Natural killer cell (primary cell): ENCODE measurements at regions of chr19 and their contacts with region 1.

Region 1: GRCh38 chr19:58305065-58305931 is at the start of gene ERVK3-1:
- DNase-seq: peak; percentile 86 to 98
- ATAC-seq: peak; percentile 94 to 99 (median 95)
- H3K4me3 ChIP-seq: peak within 1 kb of the TSS; percentile 60
- H3K4me3 Mint-ChIP-seq: peak within 1 kb of the TSS; percentile 98
- H3K27ac ChIP-seq: peak within 1 kb of the TSS; percentile 84
- H3K27ac Mint-ChIP-seq: peak within 1 kb of the TSS; percentile 99
- H3K4me1 ChIP-seq: peaks cover 10% of the 10 kb centered on the region
- H3K4me1 Mint-ChIP-seq: peaks cover 40 to 55% of the 10 kb centered on the region in 2 donors
- H3K27me3 ChIP-seq: no peaks in the 10 kb centered on the region
- H3K27me3 Mint-ChIP-seq: no peaks in the 10 kb centered on the region
- CTCF ChIP-seq: no peak
- total RNA-seq, gene ERVK3-1: 96.1 to 142 (median 119) TPM

Region 2: GRCh38 chr19:58243351-58243750 is 61.9 kb before region 1 on chr19:
- intact Hi-C with region 1: no loop called
- DNase-seq: no peak
- ATAC-seq: no peak
- H3K4me3 ChIP-seq: no peak overlapping the region
- H3K4me3 Mint-ChIP-seq: no peak overlapping the region
- H3K27ac ChIP-seq: no peak overlapping the region
- H3K27ac Mint-ChIP-seq: no peak overlapping the region
- H3K4me1 ChIP-seq: no peaks in the 10 kb centered on the region
- H3K4me1 Mint-ChIP-seq: peaks cover 4% of the 10 kb centered on the region in 2 donors
- H3K27me3 ChIP-seq: no peaks in the 10 kb centered on the region
- H3K27me3 Mint-ChIP-seq: no peaks in the 10 kb centered on the region
- CTCF ChIP-seq: no peak

Region 3: GRCh38 chr19:58278157-58279041 is 26.9 kb before region 1 on chr19 and contains the start of gene ZNF8:
- intact Hi-C with region 1: loop called (anchors 1 kb)
- DNase-seq: peak; percentile 93 to 97
- ATAC-seq: peak; percentile 97 to 100 (median 98)
- H3K4me3 ChIP-seq: peak within 1 kb of the TSS; percentile 94
- H3K4me3 Mint-ChIP-seq: peak within 1 kb of the TSS; percentile 96
- H3K27ac ChIP-seq: peak within 1 kb of the TSS; percentile 79
- H3K27ac Mint-ChIP-seq: peak within 1 kb of the TSS; percentile 94 to 99
- H3K4me1 ChIP-seq: peaks cover 13% of the 10 kb centered on the region
- H3K4me1 Mint-ChIP-seq: peaks cover 30 to 40% of the 10 kb centered on the region in 2 donors
- H3K27me3 ChIP-seq: no peaks in the 10 kb centered on the region
- H3K27me3 Mint-ChIP-seq: no peaks in the 10 kb centered on the region
- CTCF ChIP-seq: no peak
- total RNA-seq, gene ZNF8: 6.4 to 8.7 (median 7.7) TPM

Region 4: DNA sequence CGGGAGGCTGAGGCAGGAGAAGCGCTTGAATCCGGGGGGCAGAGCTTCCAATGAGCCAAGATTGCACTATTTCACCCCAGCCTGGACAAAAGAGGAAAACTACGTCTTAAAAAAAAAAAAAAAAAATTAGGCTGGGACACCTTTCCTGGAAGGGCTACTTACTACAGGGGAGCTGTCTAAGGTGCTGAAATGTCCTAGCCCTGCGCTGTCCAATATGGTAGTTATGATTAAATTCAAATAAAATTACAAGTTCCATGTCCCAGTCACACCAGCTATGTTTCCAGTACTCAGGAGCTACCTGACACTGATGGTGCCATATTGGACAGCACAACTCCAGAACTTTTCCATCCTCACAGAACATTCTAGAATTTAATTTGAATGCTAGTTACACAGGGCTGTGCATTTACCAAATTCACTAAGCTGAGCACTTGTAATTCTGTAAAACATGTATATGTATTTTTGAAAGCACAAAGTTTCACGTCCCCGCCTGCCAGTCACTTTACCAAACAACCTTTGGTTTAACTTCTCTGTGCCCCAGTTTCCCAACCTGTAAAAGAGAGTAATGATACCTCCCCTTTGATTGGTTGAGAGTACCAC is 12.3 kb after region 1 on chr19:
- intact Hi-C with region 1: no loop called
- DNase-seq: peak in 1 of 2 donors; percentile 64
- ATAC-seq: peak in 2 of 3 donors; percentile 39 to 57
- H3K4me3 ChIP-seq: no peak overlapping the region
- H3K4me3 Mint-ChIP-seq: no peak overlapping the region
- H3K27ac ChIP-seq: no peak overlapping the region
- H3K27ac Mint-ChIP-seq: no peak overlapping the region
- H3K4me1 ChIP-seq: no peaks in the 10 kb centered on the region
- H3K4me1 Mint-ChIP-seq: no peaks in the 10 kb centered on the region
- H3K27me3 ChIP-seq: no peaks in the 10 kb centered on the region
- H3K27me3 Mint-ChIP-seq: no peaks in the 10 kb centered on the region
- CTCF ChIP-seq: no peak

Region 5: DNA sequence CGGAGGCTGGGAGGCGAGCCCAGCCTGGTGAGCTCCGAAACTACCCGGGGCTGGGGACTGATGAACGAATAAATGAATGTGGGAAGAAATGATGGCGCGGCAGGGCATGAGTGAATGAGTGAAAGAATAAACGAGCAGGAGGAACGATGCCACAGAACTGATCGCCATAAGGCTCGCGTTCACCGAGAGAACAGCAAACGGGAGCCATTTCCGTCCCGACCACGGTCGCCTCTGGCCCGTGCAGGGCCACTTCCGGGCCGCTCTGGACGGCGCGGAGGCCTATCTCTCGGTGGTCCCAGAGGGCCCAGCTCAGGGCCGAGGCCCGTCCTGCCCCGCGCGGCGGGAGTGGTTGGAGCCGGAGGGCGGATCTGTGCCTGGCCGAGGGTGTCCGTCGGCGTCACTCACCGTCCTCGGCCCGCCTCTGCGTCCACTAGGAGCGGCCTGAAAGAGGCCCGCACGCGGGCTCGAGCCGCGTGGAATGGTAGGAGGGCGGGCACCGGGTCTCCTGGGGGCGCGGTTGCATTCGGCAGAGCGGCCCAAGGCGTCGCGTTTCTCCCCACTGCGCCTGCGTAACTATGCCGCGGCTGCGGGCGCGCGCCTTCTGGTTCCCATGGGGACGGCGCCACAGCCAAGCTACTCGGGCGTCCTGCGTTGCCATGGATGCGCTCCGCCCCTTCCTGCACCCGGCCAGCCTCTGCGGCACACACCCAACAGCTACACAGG is 57.1 kb after region 1 on chr19 and contains the start of gene ZNF497:
- intact Hi-C with region 1: loop called (anchors 1 kb)
- DNase-seq: peak; percentile 96 to 99
- ATAC-seq: peak; percentile 82 to 92 (median 86)
- H3K4me3 ChIP-seq: peak within 1 kb of the TSS; percentile 59
- H3K4me3 Mint-ChIP-seq: peak within 1 kb of the TSS; percentile 97
- H3K27ac ChIP-seq: peak within 1 kb of the TSS; percentile 84
- H3K27ac Mint-ChIP-seq: peak within 1 kb of the TSS; percentile 91 to 95
- H3K4me1 ChIP-seq: peaks cover 18% of the 10 kb centered on the region
- H3K4me1 Mint-ChIP-seq: peaks cover 13 to 20% of the 10 kb centered on the region in 2 donors
- H3K27me3 ChIP-seq: no peaks in the 10 kb centered on the region
- H3K27me3 Mint-ChIP-seq: no peaks in the 10 kb centered on the region
- CTCF ChIP-seq: no peak
- total RNA-seq, gene ZNF497: 0.40 to 0.61 (median 0.60) TPM

Region 6: GRCh38 chr19:58380722-58381466 is 75.6 kb after region 1 on chr19 and contains the start of gene ZNF837:
- intact Hi-C with region 1: loop called (anchors 1 kb)
- DNase-seq: peak; percentile 95 to 100
- ATAC-seq: peak; percentile 85 to 94 (median 86)
- H3K4me3 ChIP-seq: peak within 1 kb of the TSS; percentile 50
- H3K4me3 Mint-ChIP-seq: peak within 1 kb of the TSS; percentile 89
- H3K27ac ChIP-seq: peak within 1 kb of the TSS; percentile 92
- H3K27ac Mint-ChIP-seq: peak within 1 kb of the TSS; percentile 93 to 94
- H3K4me1 ChIP-seq: peaks cover 37% of the 10 kb centered on the region
- H3K4me1 Mint-ChIP-seq: peaks cover 13 to 29% of the 10 kb centered on the region in 2 donors
- H3K27me3 ChIP-seq: no peaks in the 10 kb centered on the region
- H3K27me3 Mint-ChIP-seq: no peaks in the 10 kb centered on the region
- CTCF ChIP-seq: no peak
- total RNA-seq, gene ZNF837: 0.63 to 1.4 (median 1.3) TPM